PC-3 (cell line): ENCODE measurements at regions of chr14 and their contacts with region 1.

Region 1: GRCh38 chr14:54396493-54397335 is at the start of gene CDKN3:
- DNase-seq: peak; percentile 100
- ATAC-seq: peak; percentile 95
- H3K4me3 ChIP-seq: peak within 1 kb of the TSS; percentile 90
- H3K27ac ChIP-seq: peak within 1 kb of the TSS; percentile 39
- H3K4me1 ChIP-seq: peaks cover 24% of the 10 kb centered on the region
- H3K27me3 ChIP-seq: no peaks in the 10 kb centered on the region
- CTCF ChIP-seq: peak; percentile 54; the same call in 1 of the 2 replicates
- total RNA-seq, gene CDKN3: 354 and 434 TPM in 2 replicates

Region 2: GRCh38 chr14:54226103-54226502 is 170.6 kb before region 1 on chr14:
- CTCF ChIA-PET with region 1: no interaction called
- POLR2A ChIA-PET with region 1: no interaction called
- intact Hi-C with region 1: no loop called
- DNase-seq: no peak
- ATAC-seq: no peak
- H3K4me3 ChIP-seq: no peak overlapping the region
- H3K27ac ChIP-seq: no peak overlapping the region
- H3K4me1 ChIP-seq: no peaks in the 10 kb centered on the region
- H3K27me3 ChIP-seq: no peaks in the 10 kb centered on the region
- CTCF ChIP-seq: no peak

Region 3: DNA sequence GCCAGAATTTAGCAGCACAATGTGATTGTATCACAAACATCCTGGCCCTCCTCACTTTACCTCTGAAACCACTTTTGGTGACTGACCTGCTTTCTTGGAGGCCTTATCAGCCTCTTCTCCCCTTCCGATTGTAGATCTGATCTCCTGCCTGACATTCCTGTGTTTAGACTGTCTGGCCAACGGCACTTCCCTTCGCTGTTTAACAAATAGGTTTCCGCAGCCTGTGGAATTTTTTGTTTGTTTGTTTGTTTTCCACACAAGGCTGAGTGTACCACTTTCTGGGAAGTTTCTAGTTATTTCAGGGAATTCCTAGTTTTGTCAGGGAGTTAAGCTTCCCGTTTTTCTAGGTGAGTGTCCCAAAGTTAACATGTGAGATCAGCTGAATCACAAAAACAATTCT is 65.8 kb before region 1 on chr14:
- CTCF ChIA-PET with region 1: no interaction called
- POLR2A ChIA-PET with region 1: no interaction called
- intact Hi-C with region 1: no loop called
- DNase-seq: no peak
- ATAC-seq: no peak
- H3K4me3 ChIP-seq: no peak overlapping the region
- H3K27ac ChIP-seq: no peak overlapping the region
- H3K4me1 ChIP-seq: peaks cover 29% of the 10 kb centered on the region
- H3K27me3 ChIP-seq: no peaks in the 10 kb centered on the region
- CTCF ChIP-seq: no peak

Region 4: DNA sequence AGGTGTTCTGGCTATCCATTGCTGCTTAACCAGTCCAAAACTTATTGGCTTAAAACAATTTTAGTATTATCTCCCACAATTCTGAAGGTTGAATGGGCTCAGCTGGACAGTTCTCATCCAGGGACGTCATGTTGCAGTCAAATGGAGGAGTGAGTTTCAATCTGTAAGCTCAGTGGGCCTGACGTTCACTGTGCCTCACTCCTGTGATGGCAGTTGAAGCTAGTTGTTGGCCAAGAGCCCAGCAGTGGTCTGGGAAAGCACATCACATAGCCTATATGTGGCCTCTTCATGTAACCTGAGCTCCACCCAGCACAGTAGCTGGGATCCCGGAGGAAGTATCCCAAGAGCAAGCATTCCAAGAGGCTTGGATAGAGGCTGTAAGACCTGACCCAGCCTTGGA is 40.5 kb before region 1 on chr14:
- CTCF ChIA-PET with region 1: interaction called, 3 read pairs
- POLR2A ChIA-PET with region 1: interaction called, 3 read pairs
- intact Hi-C with region 1: loop called (anchors 2 kb)
- DNase-seq: peak; percentile 100
- ATAC-seq: peak; percentile 83
- H3K4me3 ChIP-seq: peak overlapping the region; percentile 27
- H3K27ac ChIP-seq: peak overlapping the region; percentile 88
- H3K4me1 ChIP-seq: peaks cover 53% of the 10 kb centered on the region
- H3K27me3 ChIP-seq: no peaks in the 10 kb centered on the region
- CTCF ChIP-seq: no peak

Region 5: DNA sequence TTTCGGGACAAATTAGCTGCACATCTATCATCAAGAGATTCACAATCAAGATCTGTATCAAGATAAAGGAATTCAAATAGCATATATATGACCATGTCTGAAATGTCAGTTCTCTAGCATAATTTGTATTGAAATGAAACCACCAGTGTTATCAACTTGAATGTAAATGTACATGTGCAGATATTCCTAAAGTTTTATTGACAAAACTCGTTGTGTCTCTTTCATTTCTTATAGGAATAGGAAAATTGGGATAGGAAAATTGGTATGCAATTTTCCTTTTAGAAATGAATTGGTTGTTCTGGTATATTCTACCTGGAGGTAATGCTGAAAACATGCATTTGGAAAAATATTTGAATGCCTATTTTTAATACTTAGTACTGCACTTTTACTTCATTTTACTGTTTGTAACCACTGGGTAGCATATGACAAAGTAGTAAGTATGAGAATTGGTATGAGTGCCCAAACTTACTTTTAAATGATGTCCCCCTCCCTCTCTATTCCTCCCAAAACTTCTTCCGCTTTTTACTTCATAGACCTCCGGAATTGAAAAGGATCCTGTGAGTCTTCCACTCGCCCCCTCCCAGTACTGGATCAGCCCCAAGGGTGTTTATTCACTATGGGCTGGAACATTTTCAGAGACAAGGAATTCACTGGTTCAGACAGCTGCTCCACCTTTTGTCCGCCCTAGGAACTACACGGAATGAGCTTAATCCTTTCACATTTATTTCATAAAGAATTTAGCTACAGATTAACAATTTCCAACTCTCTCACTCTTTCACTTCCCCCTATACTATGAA is 23.5 kb after region 1 on chr14:
- CTCF ChIA-PET with region 1: interaction called, 15 read pairs
- POLR2A ChIA-PET with region 1: interaction called, 4 read pairs
- intact Hi-C with region 1: no loop called
- DNase-seq: peak; percentile 89
- ATAC-seq: peak; percentile 82
- H3K4me3 ChIP-seq: no peak overlapping the region
- H3K27ac ChIP-seq: no peak overlapping the region
- H3K4me1 ChIP-seq: no peaks in the 10 kb centered on the region
- H3K27me3 ChIP-seq: no peaks in the 10 kb centered on the region
- CTCF ChIP-seq: peak; percentile 96

Region 6: GRCh38 chr14:54488646-54489317 is 92.1 kb after region 1 on chr14 and contains the start of gene GMFB:
- CTCF ChIA-PET with region 1: interaction called, 3 read pairs
- POLR2A ChIA-PET with region 1: no interaction called
- intact Hi-C with region 1: loop called (anchors 1 kb)
- DNase-seq: peak; percentile 99
- ATAC-seq: peak; percentile 91
- H3K4me3 ChIP-seq: peak within 1 kb of the TSS; percentile 80
- H3K27ac ChIP-seq: peak within 1 kb of the TSS; percentile 86
- H3K4me1 ChIP-seq: peaks cover 42% of the 10 kb centered on the region
- H3K27me3 ChIP-seq: no peaks in the 10 kb centered on the region
- CTCF ChIP-seq: peak; percentile 68
- total RNA-seq, gene GMFB: 45.2 and 85.2 TPM in 2 replicates